Vagina (tissue), 2 donors: ENCODE measurements at regions of chr11 and their contacts with region 1.

Region 1: DNA sequence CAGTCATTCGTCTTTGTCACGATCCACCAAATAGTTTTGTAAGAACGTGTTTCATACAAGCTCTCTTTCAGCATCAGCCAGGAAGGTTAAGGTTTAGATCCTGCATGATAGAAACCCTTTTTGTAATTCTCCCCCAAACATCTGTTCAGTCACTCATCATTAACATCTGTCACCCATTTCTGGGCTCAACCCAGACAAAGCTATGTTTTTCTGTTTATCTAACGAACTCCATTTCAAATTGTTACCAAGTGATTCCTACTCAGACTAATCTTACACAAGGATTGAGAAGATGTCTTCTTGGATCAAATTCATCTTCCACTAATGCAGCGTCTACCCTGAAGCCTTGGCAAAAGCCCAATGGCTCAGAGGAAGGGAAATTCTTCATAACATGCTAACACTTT is 58.8 kb downstream of the FZD4 start:
- DNase-seq: no peak
- H3K4me3 ChIP-seq: no peak overlapping the region
- H3K27ac ChIP-seq: no peak overlapping the region
- H3K4me1 ChIP-seq: peaks cover 6% of the 10 kb centered on the region
- H3K27me3 ChIP-seq: no peaks in the 10 kb centered on the region
- CTCF ChIP-seq: no peak
- POLR2A ChIP-seq: no peak

Region 2: DNA sequence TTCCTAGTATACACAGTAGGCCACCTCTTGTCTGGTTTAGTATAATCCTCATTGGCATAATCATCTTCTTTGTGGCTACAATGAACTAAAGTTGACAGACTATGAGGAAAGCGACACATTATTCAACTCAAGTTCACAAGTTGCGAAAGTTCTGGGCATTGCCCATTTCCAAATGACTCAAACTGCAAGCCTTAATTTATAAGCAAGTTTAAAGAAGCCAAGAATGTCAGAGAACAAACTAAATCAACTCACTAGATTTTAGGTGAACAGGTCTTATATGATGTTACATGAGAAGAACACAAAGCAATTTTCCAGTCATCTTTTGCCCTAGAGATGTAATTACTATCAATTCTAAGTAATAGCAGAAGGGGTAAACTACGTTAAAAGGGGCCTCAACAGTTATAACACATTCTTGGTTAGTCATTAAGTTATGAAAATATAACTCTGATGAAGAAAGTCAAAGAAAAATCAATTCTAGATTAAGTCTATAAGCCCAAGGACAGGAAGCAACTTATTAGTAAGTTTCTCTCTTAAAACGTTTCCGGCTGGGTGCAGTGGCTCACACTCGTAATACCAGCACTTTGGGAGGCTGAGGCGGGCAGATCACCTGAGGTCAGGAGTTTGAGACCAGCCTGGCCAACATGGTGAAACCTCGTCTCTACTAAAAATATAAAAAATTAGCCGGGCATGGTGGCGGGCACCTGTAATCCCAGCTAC is 849.0 kb before region 1 on chr11:
- intact Hi-C with region 1: no loop called
- DNase-seq: no peak
- H3K4me3 ChIP-seq: no peak overlapping the region
- H3K27ac ChIP-seq: no peak overlapping the region
- H3K4me1 ChIP-seq: peaks cover 93% of the 10 kb centered on the region
- H3K27me3 ChIP-seq: no peaks in the 10 kb centered on the region
- CTCF ChIP-seq: no peak
- POLR2A ChIP-seq: no peak

Region 3: DNA sequence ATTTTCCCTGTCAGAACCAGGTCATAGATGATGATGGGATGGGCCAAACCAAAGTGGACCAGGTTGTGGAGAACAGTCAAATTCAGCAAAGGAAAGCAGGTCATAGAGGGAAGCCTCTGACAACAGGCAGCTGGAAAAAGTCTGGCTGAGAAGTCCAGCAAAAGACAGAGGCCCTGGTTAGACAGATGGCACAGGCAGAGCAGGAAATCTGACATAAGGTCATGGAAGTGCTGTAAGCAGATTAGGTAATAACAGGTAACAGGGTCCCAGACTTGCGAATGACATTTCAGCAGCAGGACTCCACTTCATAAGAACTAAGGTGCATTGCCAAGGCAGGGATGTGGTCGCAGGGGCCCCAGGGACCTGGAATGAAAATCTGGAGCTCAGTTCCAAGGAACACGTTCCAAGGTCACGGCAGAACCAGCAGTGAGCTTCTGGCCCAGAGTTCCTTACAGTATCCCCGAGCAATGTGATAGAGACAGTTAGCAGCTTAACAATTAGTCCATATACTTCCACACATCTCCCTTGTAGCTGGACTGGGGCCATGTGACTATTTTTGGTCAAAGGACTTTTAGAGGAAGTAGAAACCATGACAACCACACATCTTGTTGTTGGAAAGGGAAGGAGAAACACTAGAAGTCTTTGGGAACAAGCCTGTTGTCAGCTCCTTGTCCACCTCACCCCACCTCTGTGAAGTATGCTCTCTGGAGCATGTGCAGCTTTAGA is 299.4 kb before region 1 on chr11:
- intact Hi-C with region 1: loop called (anchors 5 kb)
- DNase-seq: no peak
- H3K4me3 ChIP-seq: no peak overlapping the region
- H3K27ac ChIP-seq: no peak overlapping the region
- H3K4me1 ChIP-seq: peaks cover 23% of the 10 kb centered on the region
- H3K27me3 ChIP-seq: no peaks in the 10 kb centered on the region
- CTCF ChIP-seq: no peak
- POLR2A ChIP-seq: no peak